Cardiac septum (tissue), 1 donor: ENCODE measurements at regions of chr15 and their contacts with region 1.

Region 1: DNA sequence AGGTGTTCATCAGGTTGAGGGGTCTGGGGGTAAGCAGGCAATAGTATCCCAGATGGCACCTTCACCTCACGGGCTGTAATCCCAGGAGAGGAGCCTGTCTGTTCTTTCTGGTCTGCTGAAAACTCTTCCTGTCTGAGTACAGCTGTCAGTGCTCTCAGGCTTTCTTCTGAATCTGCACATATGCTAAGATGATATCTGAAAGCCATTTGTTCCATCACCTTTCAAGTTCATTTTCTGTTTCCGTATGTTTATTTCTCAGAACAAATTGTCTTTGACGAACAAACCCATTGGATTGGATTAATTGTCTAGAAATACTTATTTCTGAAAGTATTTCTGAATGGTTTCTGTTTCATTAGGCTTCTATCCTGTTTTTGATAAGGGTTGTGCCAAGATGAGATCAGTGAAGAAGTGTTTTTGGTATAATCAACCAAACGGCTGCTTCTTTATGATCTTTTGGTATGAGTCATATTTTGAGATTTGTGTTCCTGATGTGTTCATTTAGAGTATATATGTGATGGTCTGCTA is 13.3 kb downstream of the ZNF592 start:
- DNase-seq: no peak

Region 2: DNA sequence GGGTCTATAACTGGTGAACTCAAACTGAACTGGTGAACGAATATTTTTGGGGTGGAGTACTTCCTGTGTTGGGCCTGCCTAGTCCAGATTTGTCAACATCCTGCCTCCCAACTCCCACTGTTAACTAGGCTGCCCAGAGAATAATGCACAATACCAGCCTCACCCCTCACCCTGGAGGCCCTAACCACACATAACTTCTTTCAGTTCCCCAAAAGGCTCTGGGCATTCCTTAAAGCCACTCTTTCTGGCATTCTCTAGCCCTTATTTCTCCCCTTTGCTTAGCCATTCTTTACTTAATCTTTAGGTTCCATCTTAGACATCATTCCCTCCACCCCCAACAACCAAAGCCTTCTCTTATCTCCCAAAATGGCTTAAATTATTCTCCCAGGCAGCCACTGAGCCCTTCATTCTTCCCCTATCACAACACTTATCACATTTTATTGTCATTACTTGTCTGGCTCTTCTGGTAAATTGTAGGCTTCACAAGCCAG is 36.6 kb before region 1 on chr15:
- intact Hi-C with region 1: no loop called
- DNase-seq: no peak

Region 3: GRCh38 chr15:84783496-84784251 is 22.0 kb after region 1 on chr15:
- intact Hi-C with region 1: loop called (anchors 2 kb)
- DNase-seq: no peak